ENCODE measurements at regions of chr1 and their contacts with region 1.

Region 1: GRCh38 chr1:175319418-175320230 is 127.0 kb upstream of the KIAA0040 start:
- DNase-seq: no peak
- H3K4me3 ChIP-seq: no peak overlapping the region
- H3K27ac ChIP-seq: peak overlapping the region in 2 of 4 donors; percentile 40 to 69
- H3K4me1 ChIP-seq: peaks cover 0 to 20% (median 4%) of the 10 kb centered on the region in 3 donors
- H3K27me3 ChIP-seq: peaks cover 0 to 12% (median 0%) of the 10 kb centered on the region in 4 donors
- CTCF ChIP-seq: peak; percentile 84 to 95 (median 87)
- POLR2A ChIP-seq: no peak

Region 2: GRCh38 chr1:175035865-175036264 is 283.8 kb before region 1 on chr1:
- intact Hi-C with region 1: loop called (anchors 10 kb)
- DNase-seq: no peak
- H3K4me3 ChIP-seq: no peak overlapping the region
- H3K27ac ChIP-seq: no peak overlapping the region
- H3K4me1 ChIP-seq: no peaks in the 10 kb centered on the region
- H3K27me3 ChIP-seq: no peaks in the 10 kb centered on the region
- CTCF ChIP-seq: no peak
- POLR2A ChIP-seq: no peak

Region 3: DNA sequence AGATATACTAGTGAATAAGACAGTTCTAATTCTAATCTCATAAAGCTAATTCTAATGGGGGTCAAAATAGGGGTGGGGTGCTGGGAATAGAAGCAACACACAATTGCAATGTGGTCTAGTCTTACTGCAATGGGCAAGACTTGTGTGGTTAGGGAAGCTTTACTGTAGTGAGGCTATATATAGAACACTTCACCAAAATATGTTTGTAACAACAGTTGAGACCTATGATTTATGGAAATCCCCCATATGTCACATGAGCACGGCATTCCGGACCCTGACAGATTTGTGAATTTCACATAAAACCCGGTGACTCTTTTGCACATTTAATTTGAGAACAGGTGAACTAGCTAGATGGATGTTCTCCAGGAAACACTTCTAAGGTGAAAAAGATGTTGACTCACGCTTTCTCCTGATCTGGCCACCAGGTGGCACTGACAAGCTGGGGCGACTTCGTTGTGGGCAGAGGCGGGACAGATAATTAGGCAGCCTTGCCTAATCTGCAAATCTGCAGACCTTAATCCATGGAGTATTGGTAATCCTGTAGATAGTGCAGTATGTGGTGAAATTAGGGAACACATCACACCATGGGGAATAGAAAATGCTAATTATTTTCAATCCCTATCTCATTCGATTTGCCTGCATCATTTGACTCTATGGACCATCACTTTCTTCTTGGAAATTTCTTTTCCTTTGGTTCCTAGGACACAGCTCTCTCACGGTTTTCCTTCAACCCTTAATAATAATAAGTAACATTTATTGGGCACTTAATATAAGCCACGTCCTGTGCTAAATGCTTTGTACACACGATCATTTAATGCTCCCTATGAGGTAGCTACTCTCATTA is 164.8 kb before region 1 on chr1:
- intact Hi-C with region 1: loop called (anchors 2 kb)
- DNase-seq: no peak
- H3K4me3 ChIP-seq: no peak overlapping the region
- H3K27ac ChIP-seq: no peak overlapping the region
- H3K4me1 ChIP-seq: peaks cover 0 to 8% (median 0%) of the 10 kb centered on the region in 3 donors
- H3K27me3 ChIP-seq: peaks cover 0 to 49% (median 0%) of the 10 kb centered on the region in 4 donors
- CTCF ChIP-seq: peak; percentile 86 to 95 (median 90)
- POLR2A ChIP-seq: no peak

Region 4: GRCh38 chr1:175262621-175263020 is 57.0 kb before region 1 on chr1:
- intact Hi-C with region 1: no loop called
- DNase-seq: no peak
- H3K4me3 ChIP-seq: no peak overlapping the region
- H3K27ac ChIP-seq: no peak overlapping the region
- H3K4me1 ChIP-seq: no peaks in the 10 kb centered on the region
- H3K27me3 ChIP-seq: no peaks in the 10 kb centered on the region
- CTCF ChIP-seq: no peak
- POLR2A ChIP-seq: no peak

Measured in esophagus squamous epithelium (tissue), 5 donors.